ENCODE measurements at regions of chr10 and their contacts with region 1.

Region 1: GRCh38 chr10:32346134-32346550 is 816 bp downstream of the EPC1 start:
- DNase-seq: peak; percentile 81 to 96 (median 91)
- ATAC-seq: peak; percentile 91
- H3K4me3 ChIP-seq: peak overlapping the region; percentile 74
- H3K27ac ChIP-seq: peak overlapping the region; percentile 98
- H3K4me1 ChIP-seq: peaks cover 24 to 27% of the 10 kb centered on the region in 2 experiments; a peak in 4 of 5 replicates
- H3K27me3 ChIP-seq: no peaks in the 10 kb centered on the region
- CTCF ChIP-seq: peak; percentile 95 to 96 (median 95)
- EP300 ChIP-seq: no peak
- POLR2A ChIP-seq: no peak
- RAD21 ChIP-seq: peak; percentile 83 to 86

Region 2: GRCh38 chr10:31961277-31962074 is 384.7 kb before region 1 on chr10:
- CTCF ChIA-PET with region 1: no interaction called
- POLR2A ChIA-PET with region 1: no interaction called
- in situ Hi-C with region 1: no loop called
- intact Hi-C with region 1: no loop called
- DNase-seq: no peak
- ATAC-seq: peak; percentile 35
- H3K4me3 ChIP-seq: no peak overlapping the region
- H3K27ac ChIP-seq: no peak overlapping the region
- H3K4me1 ChIP-seq: peaks cover 5 to 31% of the 10 kb centered on the region in 2 experiments; a peak in 4 of 5 replicates
- H3K27me3 ChIP-seq: no peaks in the 10 kb centered on the region
- CTCF ChIP-seq: no peak
- EP300 ChIP-seq: no peak
- POLR2A ChIP-seq: no peak
- RAD21 ChIP-seq: no peak

Region 3: DNA sequence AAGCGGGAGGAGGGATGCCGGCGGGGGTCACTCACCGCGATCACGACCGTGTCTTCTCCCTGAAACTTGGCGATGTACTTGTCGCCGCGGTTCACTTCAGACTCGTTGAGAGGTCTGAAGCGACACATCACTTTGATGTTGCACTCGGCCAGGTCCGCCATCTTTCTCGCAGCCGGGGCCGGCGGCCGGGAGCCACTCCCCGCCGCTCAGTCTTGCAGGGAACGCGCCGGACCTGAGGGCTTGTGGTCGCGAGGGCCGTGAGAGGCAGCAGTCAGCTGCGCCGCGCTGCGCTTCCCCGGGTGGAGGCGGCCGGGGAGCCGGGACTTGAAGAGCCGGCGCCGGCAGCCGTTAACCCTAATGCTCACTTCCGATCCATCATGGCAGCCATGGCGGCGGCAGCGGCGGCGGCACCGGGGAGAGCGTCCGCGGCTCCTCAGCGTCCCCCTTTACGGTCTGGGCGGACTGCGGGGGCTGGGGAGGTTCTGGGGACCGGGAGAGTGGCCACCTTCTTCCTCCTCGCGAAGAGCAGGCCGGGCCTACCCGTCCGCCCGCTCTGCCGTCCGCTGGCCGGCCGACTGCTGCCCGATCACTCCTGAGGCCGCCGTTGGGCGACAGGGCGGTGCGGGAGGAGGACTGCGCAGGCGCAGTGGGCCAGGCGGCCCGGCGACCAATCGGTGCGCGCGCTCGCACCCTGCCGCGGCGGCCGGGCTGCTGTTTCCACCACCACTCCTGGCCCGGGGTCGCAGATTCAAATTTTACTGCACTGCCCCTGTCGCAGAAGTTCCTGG is 290.1 kb before region 1 on chr10 and contains the start of gene KIF5B:
- CTCF ChIA-PET with region 1: no interaction called
- POLR2A ChIA-PET with region 1: no interaction called
- in situ Hi-C with region 1: loop called (anchors 10 kb)
- intact Hi-C with region 1: no loop called
- DNase-seq: peak; percentile 94 to 98 (median 98)
- ATAC-seq: peak; percentile 87
- H3K4me3 ChIP-seq: peak within 1 kb of the TSS; percentile 95
- H3K27ac ChIP-seq: peak within 1 kb of the TSS; percentile 95
- H3K4me1 ChIP-seq: peaks cover 12 to 43% of the 10 kb centered on the region in 2 experiments
- H3K27me3 ChIP-seq: no peaks in the 10 kb centered on the region
- CTCF ChIP-seq: no peak
- EP300 ChIP-seq: no peak
- POLR2A ChIP-seq: peak; percentile 99
- RAD21 ChIP-seq: no peak
- polyA plus RNA-seq, gene KIF5B: 24.4 to 29.8 TPM

Region 4: GRCh38 chr10:32256613-32257437 is 89.3 kb before region 1 on chr10:
- CTCF ChIA-PET with region 1: interaction called, 4 read pairs
- POLR2A ChIA-PET with region 1: interaction called, 5 read pairs
- in situ Hi-C with region 1: no loop called
- intact Hi-C with region 1: loop called (anchors 2 kb)
- DNase-seq: peak; percentile 56 to 78 (median 63)
- ATAC-seq: peak; percentile 80
- H3K4me3 ChIP-seq: no peak overlapping the region
- H3K27ac ChIP-seq: no peak overlapping the region
- H3K4me1 ChIP-seq: peaks cover 6 to 13% of the 10 kb centered on the region in 2 experiments; a peak in 2 of 5 replicates
- H3K27me3 ChIP-seq: no peaks in the 10 kb centered on the region
- CTCF ChIP-seq: peak; percentile 83 to 94 (median 89)
- EP300 ChIP-seq: no peak
- POLR2A ChIP-seq: no peak
- RAD21 ChIP-seq: peak; percentile 66 to 82

Region 5: DNA sequence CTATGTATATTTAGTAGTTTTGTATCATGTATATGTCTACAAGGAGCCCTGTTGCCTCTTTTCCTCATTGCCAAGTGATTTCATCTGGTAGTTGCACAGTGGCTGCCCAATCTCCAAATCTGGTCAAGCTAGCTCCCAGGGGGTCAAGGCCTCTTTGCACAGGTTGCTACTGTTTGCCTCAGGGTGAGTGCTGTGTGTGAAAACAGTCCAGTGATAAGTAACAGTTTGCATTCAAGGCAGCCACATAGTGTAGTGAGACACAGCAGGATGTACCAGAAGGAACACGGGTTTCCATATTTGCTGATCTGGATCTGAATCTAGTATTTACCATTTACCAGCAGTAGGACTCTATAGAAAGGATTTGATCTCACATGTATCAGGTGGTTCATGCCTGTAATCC is 14.1 kb after region 1 on chr10:
- CTCF ChIA-PET with region 1: no interaction called
- POLR2A ChIA-PET with region 1: interaction called, 12 read pairs
- in situ Hi-C with region 1: no loop called
- intact Hi-C with region 1: no loop called
- DNase-seq: no peak
- ATAC-seq: no peak
- H3K4me3 ChIP-seq: no peak overlapping the region
- H3K27ac ChIP-seq: no peak overlapping the region
- H3K4me1 ChIP-seq: no peaks in the 10 kb centered on the region; a peak in 2 of 5 replicates
- H3K27me3 ChIP-seq: no peaks in the 10 kb centered on the region
- CTCF ChIP-seq: no peak
- EP300 ChIP-seq: no peak
- POLR2A ChIP-seq: no peak
- RAD21 ChIP-seq: no peak

Region 6: GRCh38 chr10:32367793-32368453 is 21.8 kb after region 1 on chr10:
- CTCF ChIA-PET with region 1: interaction called, 3 read pairs
- POLR2A ChIA-PET with region 1: interaction called, 4 read pairs
- in situ Hi-C with region 1: no loop called
- intact Hi-C with region 1: loop called (anchors 2 kb)
- DNase-seq: peak; percentile 46 to 77 (median 48)
- ATAC-seq: peak; percentile 77
- H3K4me3 ChIP-seq: no peak overlapping the region
- H3K27ac ChIP-seq: no peak overlapping the region
- H3K4me1 ChIP-seq: no peaks in the 10 kb centered on the region
- H3K27me3 ChIP-seq: no peaks in the 10 kb centered on the region
- CTCF ChIP-seq: peak; percentile 67 to 85 (median 71)
- EP300 ChIP-seq: no peak
- POLR2A ChIP-seq: no peak
- RAD21 ChIP-seq: peak; percentile 66 to 71

Measured in K562 (cell line).